Activated CD4-positive, alpha-beta T cell treated with anti-CD3 and anti-CD28 coated beads for 36 hours (primary cell): ENCODE measurements at regions of chr7 and their contacts with region 1.

Region 1: GRCh38 chr7:149195180-149196150 is at the start of gene ZNF282:
- DNase-seq: peak; percentile 89
- ATAC-seq: peak; percentile 91
- H3K4me3 Mint-ChIP-seq: peak within 1 kb of the TSS; percentile 95
- H3K27ac Mint-ChIP-seq: peak within 1 kb of the TSS; percentile 94
- H3K4me1 Mint-ChIP-seq: peaks cover 42% of the 10 kb centered on the region
- H3K27me3 Mint-ChIP-seq: no peaks in the 10 kb centered on the region
- total RNA-seq, gene ZNF282: 41.1 to 46.3 TPM

Region 2: GRCh38 chr7:147595042-147595441 is 1600.4 kb before region 1 on chr7:
- CTCF ChIA-PET with region 1: no interaction called
- POLR2A ChIA-PET with region 1: no interaction called
- intact Hi-C with region 1: no loop called
- DNase-seq: no peak
- ATAC-seq: no peak
- H3K4me3 Mint-ChIP-seq: no peak overlapping the region
- H3K27ac Mint-ChIP-seq: no peak overlapping the region
- H3K4me1 Mint-ChIP-seq: no peaks in the 10 kb centered on the region
- H3K27me3 Mint-ChIP-seq: no peaks in the 10 kb centered on the region

Region 3: GRCh38 chr7:149007611-149008010 is 187.9 kb before region 1 on chr7:
- CTCF ChIA-PET with region 1: no interaction called
- POLR2A ChIA-PET with region 1: no interaction called
- intact Hi-C with region 1: no loop called
- DNase-seq: no peak
- ATAC-seq: peak; percentile 25
- H3K4me3 Mint-ChIP-seq: no peak overlapping the region
- H3K27ac Mint-ChIP-seq: no peak overlapping the region
- H3K4me1 Mint-ChIP-seq: peaks cover 2% of the 10 kb centered on the region
- H3K27me3 Mint-ChIP-seq: no peaks in the 10 kb centered on the region

Region 4: DNA sequence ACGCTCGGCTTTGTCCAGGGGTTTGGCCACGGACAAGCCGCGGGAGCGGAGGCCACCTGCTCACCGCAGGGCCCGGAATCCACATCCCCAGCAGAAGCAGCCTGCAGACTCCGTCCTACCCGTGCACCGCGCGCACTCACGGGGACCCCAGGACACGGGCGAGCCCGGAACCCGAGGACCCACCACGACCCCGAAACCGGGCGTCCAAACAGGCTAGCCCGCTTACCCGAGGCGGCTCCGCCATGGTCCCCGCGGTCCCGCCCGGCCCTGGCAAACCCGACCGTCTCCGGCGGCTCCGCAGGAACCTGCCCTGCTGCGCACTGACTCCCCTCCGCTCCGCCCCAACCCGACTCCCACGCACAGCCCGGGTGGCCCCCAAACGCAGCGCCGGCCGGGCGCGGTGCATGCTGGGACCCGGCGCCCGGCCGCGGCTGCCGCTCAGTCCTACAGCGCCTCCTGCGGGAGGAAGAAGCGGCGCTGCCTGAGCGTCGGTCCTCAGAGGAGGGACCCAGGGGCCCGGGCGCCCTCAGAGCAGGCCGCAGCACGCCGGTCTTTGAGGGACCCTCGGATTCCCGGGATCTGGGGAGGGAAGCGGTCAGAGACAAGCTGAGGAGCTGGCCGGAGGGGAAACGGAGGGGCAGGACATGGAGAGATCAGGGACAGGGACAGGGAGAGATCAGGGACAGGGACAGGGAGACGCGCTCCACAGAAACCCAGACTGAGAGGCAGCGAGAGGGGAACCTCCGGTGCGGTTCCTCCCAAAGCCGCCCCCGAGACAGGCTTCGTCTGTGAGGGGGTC is 104.9 kb before region 1 on chr7 and contains the start of gene ZNF786:
- CTCF ChIA-PET with region 1: no interaction called
- POLR2A ChIA-PET with region 1: no interaction called
- intact Hi-C with region 1: loop called in 1 of 2 experiments (anchors 2 kb)
- DNase-seq: peak; percentile 97
- ATAC-seq: peak; percentile 87
- H3K4me3 Mint-ChIP-seq: peak within 1 kb of the TSS; percentile 89
- H3K27ac Mint-ChIP-seq: peak within 1 kb of the TSS; percentile 100
- H3K4me1 Mint-ChIP-seq: peaks cover 19% of the 10 kb centered on the region
- H3K27me3 Mint-ChIP-seq: no peaks in the 10 kb centered on the region
- total RNA-seq, gene ZNF786: 4.4 to 4.8 TPM

Region 5: GRCh38 chr7:149147072-149147751 is 48.3 kb before region 1 on chr7 and contains the start of gene ZNF398:
- CTCF ChIA-PET with region 1: interaction called, 30 read pairs
- POLR2A ChIA-PET with region 1: interaction called, 5 read pairs
- intact Hi-C with region 1: loop called in 1 of 2 experiments (anchors 1 kb)
- DNase-seq: peak; percentile 87
- ATAC-seq: peak; percentile 71
- H3K4me3 Mint-ChIP-seq: peak within 1 kb of the TSS; percentile 98
- H3K27ac Mint-ChIP-seq: peak within 1 kb of the TSS; percentile 99
- H3K4me1 Mint-ChIP-seq: peaks cover 34% of the 10 kb centered on the region
- H3K27me3 Mint-ChIP-seq: no peaks in the 10 kb centered on the region
- total RNA-seq, gene ZNF398: 9.6 to 10.5 TPM

Region 6: DNA sequence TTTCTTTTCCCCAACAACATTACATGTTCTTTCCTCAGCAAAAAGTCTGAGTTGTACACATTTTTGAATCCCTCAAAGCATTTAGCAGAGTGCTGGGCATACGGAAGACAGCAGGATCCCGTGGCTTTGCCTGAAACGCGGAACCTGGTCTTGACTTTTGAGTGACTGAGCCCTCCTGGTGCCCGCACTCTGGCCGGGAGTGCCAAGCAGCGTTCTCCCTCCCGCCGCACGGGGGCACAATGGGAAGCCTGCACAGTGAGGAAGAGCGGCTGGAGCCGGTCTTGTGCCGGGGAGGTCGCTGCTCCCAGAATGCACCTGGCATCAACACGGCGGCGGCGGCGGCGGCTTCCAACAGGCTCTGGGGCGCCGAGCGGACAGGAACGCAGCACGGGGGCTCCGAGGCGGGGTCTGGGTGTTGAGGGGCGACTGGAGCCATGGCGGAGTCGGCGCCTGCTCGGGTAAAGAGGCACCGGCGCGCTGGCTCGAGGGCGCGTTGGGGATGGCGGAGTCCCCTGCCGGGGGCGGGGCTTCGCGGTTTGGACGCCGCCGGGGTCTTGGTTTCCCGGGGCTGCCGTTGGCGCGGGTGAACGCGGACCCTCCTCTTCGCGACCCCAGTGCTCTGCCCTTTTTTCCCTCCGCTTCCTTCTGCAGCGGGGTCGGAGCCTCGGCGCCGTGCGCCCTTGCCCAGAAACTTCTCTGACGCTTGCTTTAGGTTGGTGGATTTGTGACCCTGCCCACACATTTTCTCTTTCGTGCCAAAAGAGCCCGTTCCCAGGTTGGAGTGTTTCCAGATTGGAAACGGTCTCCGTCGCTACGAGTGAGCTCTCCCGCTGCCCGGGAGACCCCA is 44.1 kb after region 1 on chr7 and contains the start of gene ZNF212:
- CTCF ChIA-PET with region 1: interaction called, 7 read pairs
- POLR2A ChIA-PET with region 1: no interaction called
- intact Hi-C with region 1: loop called in 1 of 2 experiments (anchors 1 kb)
- DNase-seq: peak; percentile 95
- ATAC-seq: peak; percentile 98
- H3K4me3 Mint-ChIP-seq: peak within 1 kb of the TSS; percentile 93
- H3K27ac Mint-ChIP-seq: peak within 1 kb of the TSS; percentile 83
- H3K4me1 Mint-ChIP-seq: peaks cover 32% of the 10 kb centered on the region
- H3K27me3 Mint-ChIP-seq: no peaks in the 10 kb centered on the region
- total RNA-seq, gene ZNF212: 9.9 to 15.9 TPM

Region 7: DNA sequence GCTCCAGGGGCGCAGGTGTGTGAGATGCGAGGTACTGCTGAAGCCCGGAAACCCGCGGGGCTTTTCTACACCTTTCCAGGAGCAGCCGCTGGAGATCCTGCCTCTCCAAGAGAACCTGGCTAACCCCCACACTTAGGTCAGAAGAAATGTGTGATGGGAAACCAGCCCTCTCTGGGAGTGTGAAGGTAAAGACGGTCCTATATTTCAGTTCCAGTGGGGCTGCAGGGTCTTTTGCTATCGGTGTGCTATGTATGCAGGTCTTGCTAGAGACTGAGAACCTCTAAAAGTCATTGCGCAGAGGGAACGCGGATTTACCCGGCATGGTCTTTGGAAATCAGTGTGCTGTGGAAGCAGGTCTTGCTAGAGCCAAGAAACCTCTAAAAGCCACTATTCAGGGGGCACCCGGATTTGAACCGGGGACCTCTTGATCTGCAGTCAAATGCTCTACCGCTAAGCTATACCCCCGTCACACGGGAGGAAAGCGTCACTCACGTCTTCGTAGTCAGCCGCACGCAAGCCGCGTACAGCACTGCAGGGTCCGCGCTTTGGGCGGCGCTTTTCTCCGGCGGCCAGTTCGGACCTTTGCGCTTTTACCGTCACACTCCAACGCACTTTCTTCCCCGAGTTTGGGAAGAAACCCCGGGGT is 219.4 kb after region 1 on chr7:
- CTCF ChIA-PET with region 1: no interaction called
- POLR2A ChIA-PET with region 1: no interaction called
- intact Hi-C with region 1: loop called in 1 of 2 experiments (anchors 10 kb)
- DNase-seq: peak; percentile 67
- ATAC-seq: peak; percentile 74
- H3K4me3 Mint-ChIP-seq: peak overlapping the region; percentile 56
- H3K27ac Mint-ChIP-seq: no peak overlapping the region
- H3K4me1 Mint-ChIP-seq: peaks cover 3% of the 10 kb centered on the region
- H3K27me3 Mint-ChIP-seq: peaks cover 17% of the 10 kb centered on the region

Region 8: GRCh38 chr7:149598721-149599306 is 403.3 kb after region 1 on chr7:
- CTCF ChIA-PET with region 1: no interaction called
- POLR2A ChIA-PET with region 1: interaction called, 16 read pairs
- intact Hi-C with region 1: no loop called
- DNase-seq: peak; percentile 65
- ATAC-seq: peak; percentile 38
- H3K4me3 Mint-ChIP-seq: no peak overlapping the region
- H3K27ac Mint-ChIP-seq: no peak overlapping the region
- H3K4me1 Mint-ChIP-seq: peaks cover 34% of the 10 kb centered on the region
- H3K27me3 Mint-ChIP-seq: no peaks in the 10 kb centered on the region

Region 9: GRCh38 chr7:150340024-150340749 is 1144.7 kb after region 1 on chr7:
- CTCF ChIA-PET with region 1: no interaction called
- POLR2A ChIA-PET with region 1: no interaction called
- intact Hi-C with region 1: no loop called
- DNase-seq: peak; percentile 29
- ATAC-seq: peak; percentile 49
- H3K4me3 Mint-ChIP-seq: no peak overlapping the region
- H3K27ac Mint-ChIP-seq: no peak overlapping the region
- H3K4me1 Mint-ChIP-seq: peaks cover 2% of the 10 kb centered on the region
- H3K27me3 Mint-ChIP-seq: peaks cover 18% of the 10 kb centered on the region